WTC11 (cell line): ENCODE measurements at regions of chr17 and their contacts with region 1.

Region 1: GRCh38 chr17:3636154-3636907 is at the starts of genes CTNS and SHPK:
- DNase-seq: peak; percentile 97
- ATAC-seq: peak; percentile 97
- H3K4me3 Mint-ChIP-seq: peak within 1 kb of the TSS; percentile 97
- H3K27ac Mint-ChIP-seq: peak within 1 kb of the TSS; percentile 100
- H3K4me1 Mint-ChIP-seq: peaks cover 27% of the 10 kb centered on the region
- H3K27me3 Mint-ChIP-seq: no peaks in the 10 kb centered on the region
- CTCF ChIP-seq: no peak
- total RNA-seq, gene CTNS: 10.7 to 11.9 TPM (median 11.8 TPM) in 3 replicates
- total RNA-seq, gene SHPK: 29.0 to 29.3 TPM (median 29.2 TPM) in 3 replicates

Region 2: GRCh38 chr17:3647769-3648555 is 11.6 kb after region 1 on chr17:
- CTCF ChIA-PET with region 1: interaction called, 25 read pairs
- POLR2A ChIA-PET with region 1: interaction called, 4 read pairs
- DNase-seq: peak; percentile 58
- ATAC-seq: peak; percentile 93
- H3K4me3 Mint-ChIP-seq: no peak overlapping the region
- H3K27ac Mint-ChIP-seq: peak overlapping the region; percentile 17; the same call in 1 of the 2 replicates
- H3K4me1 Mint-ChIP-seq: no peaks in the 10 kb centered on the region
- H3K27me3 Mint-ChIP-seq: no peaks in the 10 kb centered on the region
- CTCF ChIP-seq: no peak

Region 3: GRCh38 chr17:3773511-3773910 is 137.2 kb after region 1 on chr17:
- CTCF ChIA-PET with region 1: no interaction called
- POLR2A ChIA-PET with region 1: no interaction called
- DNase-seq: no peak
- ATAC-seq: no peak
- H3K4me3 Mint-ChIP-seq: no peak overlapping the region
- H3K27ac Mint-ChIP-seq: no peak overlapping the region
- H3K4me1 Mint-ChIP-seq: peaks cover 15% of the 10 kb centered on the region
- H3K27me3 Mint-ChIP-seq: no peaks in the 10 kb centered on the region; the same call in 1 of the 2 replicates
- CTCF ChIP-seq: no peak